ENCODE measurements at regions of chr10 and their contacts with region 1.

Region 1: DNA sequence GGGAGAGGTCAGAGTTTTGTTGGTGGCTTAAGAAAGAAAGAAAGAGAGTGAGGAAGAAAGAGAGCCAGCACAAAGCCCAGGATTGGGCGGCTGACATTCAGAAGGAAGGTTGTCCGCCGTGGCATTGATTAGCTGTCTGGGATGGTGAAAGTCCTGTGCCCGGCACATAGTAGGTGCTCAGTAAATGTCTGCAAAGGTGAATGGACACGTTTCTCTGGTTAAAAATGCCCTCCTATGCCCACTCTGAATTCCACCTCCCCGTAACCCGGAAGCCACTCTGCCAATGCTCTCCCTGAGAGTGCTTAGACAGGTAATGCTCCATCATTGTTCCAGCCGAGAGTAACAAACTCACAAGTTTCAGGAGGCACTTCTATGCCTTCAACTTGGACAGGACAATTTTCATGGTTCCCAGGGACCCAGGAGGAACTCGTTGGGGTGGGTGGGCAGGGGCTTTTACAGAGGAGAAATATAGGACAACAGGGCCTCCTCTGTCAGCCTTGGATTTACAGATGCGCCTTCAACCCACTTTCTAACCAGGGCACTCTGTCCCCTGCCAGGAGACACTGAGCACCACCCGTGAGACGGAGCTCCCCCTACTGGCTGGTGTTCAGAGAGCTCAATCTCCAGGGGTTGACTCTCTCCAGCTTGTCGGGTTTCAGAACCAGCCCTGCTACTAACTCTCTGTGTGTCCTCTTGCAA is 411.5 kb upstream of the ZMIZ1 start:
- DNase-seq: peak; percentile 43
- ATAC-seq: peak; percentile 99
- H3K4me3 ChIP-seq: no peak overlapping the region
- H3K27ac ChIP-seq: no peak overlapping the region
- H3K4me1 ChIP-seq: no peaks in the 10 kb centered on the region
- H3K27me3 ChIP-seq: peaks cover 27% of the 10 kb centered on the region; the same call in 1 of the 2 replicates
- CTCF ChIP-seq: peak; percentile 55 to 92 (median 74); a peak in 5 of 6 replicates
- POLR2A ChIP-seq: no peak
- RAD21 ChIP-seq: peak; percentile 79

Region 2: DNA sequence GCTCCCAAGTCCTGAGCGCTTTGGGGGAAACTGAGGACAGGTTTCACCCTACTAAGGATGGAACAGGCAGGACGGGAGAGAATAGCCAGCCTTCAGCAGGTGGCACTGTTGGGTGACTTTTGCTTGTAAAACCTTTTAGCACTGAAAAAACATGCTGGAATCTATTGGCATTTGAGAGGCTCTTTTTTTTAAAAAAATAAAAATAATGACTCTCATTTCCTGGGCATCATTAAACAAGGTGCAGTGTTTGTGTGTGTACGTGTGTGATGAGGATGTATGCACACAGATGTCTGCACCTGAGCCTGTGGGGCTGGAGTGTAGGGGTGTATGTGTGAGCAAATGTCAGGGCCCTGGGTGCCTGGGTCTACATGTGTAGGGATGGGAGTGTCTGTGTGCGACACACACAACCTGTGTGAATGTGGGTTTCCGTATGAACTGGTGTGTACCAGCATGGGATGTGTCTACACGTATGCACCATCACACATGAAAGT is 445.7 kb before region 1 on chr10:
- CTCF ChIA-PET with region 1: no interaction called
- POLR2A ChIA-PET with region 1: no interaction called
- RAD21 ChIA-PET with region 1: no interaction called
- intact Hi-C with region 1: loop called (anchors 5 kb)
- DNase-seq: peak; percentile 6
- ATAC-seq: peak; percentile 60
- H3K4me3 ChIP-seq: no peak overlapping the region
- H3K27ac ChIP-seq: no peak overlapping the region
- H3K4me1 ChIP-seq: no peaks in the 10 kb centered on the region
- H3K27me3 ChIP-seq: peaks cover 15% of the 10 kb centered on the region; the same call in 1 of the 2 replicates
- CTCF ChIP-seq: peak; percentile 48 to 61 (median 59); a peak in 5 of 6 replicates
- POLR2A ChIP-seq: no peak
- RAD21 ChIP-seq: peak; percentile 80

Region 3: DNA sequence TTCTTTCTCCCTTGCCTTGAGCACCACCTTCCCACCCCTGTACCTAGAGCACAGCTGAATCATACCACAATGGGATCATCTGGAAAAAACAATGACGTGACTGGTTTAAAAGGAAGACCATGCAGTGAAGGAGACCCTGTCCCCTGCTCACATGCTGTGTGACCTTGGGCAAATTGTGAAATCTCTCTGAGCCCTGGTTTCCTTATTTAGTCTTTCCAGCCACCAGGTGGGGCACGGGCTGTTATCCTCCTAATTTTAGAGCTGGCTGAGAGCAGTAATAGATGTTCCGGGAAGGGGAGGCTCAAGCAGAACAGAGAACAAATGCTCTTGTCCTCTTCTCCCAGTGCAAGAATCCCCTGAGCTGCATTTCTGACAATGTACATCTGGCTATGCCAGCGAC is 425.4 kb before region 1 on chr10:
- CTCF ChIA-PET with region 1: interaction called, 4 read pairs
- POLR2A ChIA-PET with region 1: no interaction called
- RAD21 ChIA-PET with region 1: no interaction called
- intact Hi-C with region 1: loop called (anchors 10 kb)
- DNase-seq: no peak
- ATAC-seq: peak; percentile 49; the same call in 1 of the 2 replicates
- H3K4me3 ChIP-seq: no peak overlapping the region
- H3K27ac ChIP-seq: no peak overlapping the region
- H3K4me1 ChIP-seq: no peaks in the 10 kb centered on the region
- H3K27me3 ChIP-seq: peaks cover 3% of the 10 kb centered on the region; the same call in 1 of the 2 replicates
- CTCF ChIP-seq: peak; percentile 21 to 41 (median 24); a peak in 3 of 6 replicates
- POLR2A ChIP-seq: no peak
- RAD21 ChIP-seq: peak; percentile 46

Region 4: DNA sequence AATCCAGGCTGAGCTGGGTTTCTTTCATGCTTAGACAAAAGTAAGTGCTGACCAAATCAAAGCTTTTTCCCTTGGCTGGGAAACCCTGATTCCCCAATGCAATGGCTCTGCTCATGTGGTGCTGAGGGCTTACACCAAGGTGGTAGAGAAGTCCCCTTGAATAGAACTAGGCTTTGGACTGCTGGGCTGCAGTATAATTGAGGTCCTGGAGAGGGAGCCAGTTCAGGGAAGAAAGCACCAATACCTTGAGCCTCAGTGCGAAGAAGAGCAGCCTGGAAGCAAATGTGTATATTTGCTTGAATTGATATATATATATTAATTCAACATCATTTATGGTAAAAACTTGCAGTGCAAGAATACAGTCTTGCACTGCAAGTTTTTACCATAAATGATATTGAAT is 232.6 kb before region 1 on chr10:
- CTCF ChIA-PET with region 1: no interaction called
- POLR2A ChIA-PET with region 1: no interaction called
- RAD21 ChIA-PET with region 1: no interaction called
- intact Hi-C with region 1: loop called (anchors 1 kb)
- DNase-seq: peak; percentile 41
- ATAC-seq: peak; percentile 96
- H3K4me3 ChIP-seq: no peak overlapping the region
- H3K27ac ChIP-seq: no peak overlapping the region
- H3K4me1 ChIP-seq: no peaks in the 10 kb centered on the region
- H3K27me3 ChIP-seq: peaks cover 32% of the 10 kb centered on the region
- CTCF ChIP-seq: peak; percentile 42 to 73 (median 50); a peak in 5 of 6 replicates
- POLR2A ChIP-seq: no peak
- RAD21 ChIP-seq: peak; percentile 60

Measured in HCT116 (cell line).